AG04449 (cell line): ENCODE measurements at regions of chr15 and their contacts with region 1.

Region 1: GRCh38 chr15:79853458-79854328 is 43.1 kb downstream of the MTHFS start:
- DNase-seq: peak; percentile 60
- H3K4me3 ChIP-seq: no peak overlapping the region
- CTCF ChIP-seq: peak; percentile 96

Region 2: GRCh38 chr15:79349525-79349924 is 504.2 kb before region 1 on chr15:
- CTCF ChIA-PET with region 1: interaction called, 92 read pairs
- POLR2A ChIA-PET with region 1: no interaction called
- DNase-seq: no peak
- H3K4me3 ChIP-seq: no peak overlapping the region
- CTCF ChIP-seq: no peak

Region 3: GRCh38 chr15:79364571-79365240 is 489.0 kb before region 1 on chr15:
- CTCF ChIA-PET with region 1: interaction called, 29 read pairs
- POLR2A ChIA-PET with region 1: no interaction called
- DNase-seq: no peak
- H3K4me3 ChIP-seq: no peak overlapping the region
- CTCF ChIP-seq: no peak

Region 4: GRCh38 chr15:79394231-79394630 is 459.5 kb before region 1 on chr15:
- CTCF ChIA-PET with region 1: interaction called, 18 read pairs
- POLR2A ChIA-PET with region 1: no interaction called
- DNase-seq: no peak
- H3K4me3 ChIP-seq: no peak overlapping the region
- CTCF ChIP-seq: no peak

Region 5: DNA sequence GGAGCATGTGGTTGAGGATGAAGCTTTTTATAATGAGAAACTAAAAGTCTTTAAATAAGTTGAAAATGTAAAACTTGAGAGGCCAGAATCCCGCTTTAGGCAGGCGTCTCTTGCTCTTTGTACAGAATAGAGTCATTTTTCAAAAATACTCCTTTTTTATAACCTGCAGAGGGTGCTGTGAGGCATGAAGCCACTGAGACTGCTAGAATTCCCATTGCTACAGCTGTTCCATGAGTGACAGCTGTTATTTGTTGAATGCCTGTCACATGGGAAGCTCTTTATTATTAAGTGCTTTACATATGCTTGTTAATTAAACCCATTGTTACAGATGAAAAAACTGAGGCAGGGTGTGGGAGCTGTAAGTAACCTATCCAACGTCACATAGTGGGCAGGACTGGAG is 403.0 kb before region 1 on chr15:
- CTCF ChIA-PET with region 1: interaction called, 189 read pairs
- POLR2A ChIA-PET with region 1: no interaction called
- DNase-seq: no peak
- H3K4me3 ChIP-seq: no peak overlapping the region
- CTCF ChIP-seq: peak; percentile 8

Region 6: DNA sequence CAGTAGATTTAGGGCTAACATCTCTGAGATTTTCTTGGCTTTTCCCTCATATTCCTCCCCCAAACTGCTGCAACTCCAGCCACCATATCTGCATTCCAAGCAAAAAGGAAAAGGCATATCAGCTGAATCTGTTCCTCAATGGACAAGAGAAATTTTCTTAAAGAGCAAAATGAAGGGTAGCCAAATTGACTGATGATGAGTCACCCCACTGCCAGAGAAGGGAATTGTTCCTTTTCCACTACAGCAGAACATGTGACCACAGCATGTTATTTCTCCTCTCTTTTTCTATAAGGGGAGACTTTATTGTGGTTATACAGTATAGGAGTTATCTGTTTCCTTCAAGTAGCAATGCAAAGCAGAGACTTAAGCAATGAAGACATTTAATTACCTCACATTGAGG is 129.4 kb before region 1 on chr15:
- CTCF ChIA-PET with region 1: no interaction called
- POLR2A ChIA-PET with region 1: no interaction called
- DNase-seq: peak; percentile 34
- H3K4me3 ChIP-seq: no peak overlapping the region
- CTCF ChIP-seq: no peak

Region 7: GRCh38 chr15:79834495-79834894 is 19.2 kb before region 1 on chr15:
- CTCF ChIA-PET with region 1: interaction called, 14 read pairs
- POLR2A ChIA-PET with region 1: no interaction called
- DNase-seq: no peak
- H3K4me3 ChIP-seq: no peak overlapping the region
- CTCF ChIP-seq: no peak

Region 8: GRCh38 chr15:79994615-79995014 is 140.9 kb after region 1 on chr15:
- CTCF ChIA-PET with region 1: interaction called, 31 read pairs
- POLR2A ChIA-PET with region 1: no interaction called
- DNase-seq: no peak
- H3K4me3 ChIP-seq: no peak overlapping the region
- CTCF ChIP-seq: no peak